Adrenal gland (tissue), 19 donors: ENCODE measurements at regions of chr3 and their contacts with region 1.

Region 1: DNA sequence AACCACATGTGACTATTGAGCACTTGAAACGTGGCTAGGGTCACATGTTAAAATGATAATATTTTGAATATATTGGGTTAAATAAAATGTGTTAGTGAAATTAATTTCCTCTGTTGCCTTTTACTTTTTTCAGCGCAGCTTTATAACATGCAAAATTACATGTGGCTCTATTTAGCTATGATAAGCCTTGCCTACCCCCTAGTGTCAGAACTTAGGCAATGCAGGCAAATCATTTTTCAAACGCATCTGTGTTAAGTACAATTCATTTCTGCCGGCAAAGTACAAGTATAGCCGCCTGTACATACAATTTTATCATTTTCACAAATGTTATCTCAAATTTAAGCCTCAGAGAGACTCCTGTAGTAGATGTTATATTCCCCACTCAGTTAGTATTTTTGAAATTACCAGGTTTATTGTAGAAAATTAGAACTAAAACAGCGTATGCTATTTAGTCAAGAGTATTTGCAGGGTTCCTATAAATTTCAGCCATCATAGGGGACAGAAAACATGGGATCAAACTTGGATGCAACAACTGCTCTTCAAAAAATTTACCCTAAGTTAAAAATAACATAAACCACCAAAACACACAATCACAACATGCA is 56.1 kb downstream of the TAFA4 start:
- DNase-seq: peak in 6 of 7 donors; percentile 30 to 73 (median 39)
- H3K4me3 ChIP-seq: no peak overlapping the region
- H3K27ac ChIP-seq: no peak overlapping the region
- H3K4me1 ChIP-seq: no peaks in the 10 kb centered on the region
- H3K27me3 ChIP-seq: no peaks in the 10 kb centered on the region
- CTCF ChIP-seq: peak; percentile 65 to 89 (median 86)
- POLR2A ChIP-seq: no peak

Region 2: DNA sequence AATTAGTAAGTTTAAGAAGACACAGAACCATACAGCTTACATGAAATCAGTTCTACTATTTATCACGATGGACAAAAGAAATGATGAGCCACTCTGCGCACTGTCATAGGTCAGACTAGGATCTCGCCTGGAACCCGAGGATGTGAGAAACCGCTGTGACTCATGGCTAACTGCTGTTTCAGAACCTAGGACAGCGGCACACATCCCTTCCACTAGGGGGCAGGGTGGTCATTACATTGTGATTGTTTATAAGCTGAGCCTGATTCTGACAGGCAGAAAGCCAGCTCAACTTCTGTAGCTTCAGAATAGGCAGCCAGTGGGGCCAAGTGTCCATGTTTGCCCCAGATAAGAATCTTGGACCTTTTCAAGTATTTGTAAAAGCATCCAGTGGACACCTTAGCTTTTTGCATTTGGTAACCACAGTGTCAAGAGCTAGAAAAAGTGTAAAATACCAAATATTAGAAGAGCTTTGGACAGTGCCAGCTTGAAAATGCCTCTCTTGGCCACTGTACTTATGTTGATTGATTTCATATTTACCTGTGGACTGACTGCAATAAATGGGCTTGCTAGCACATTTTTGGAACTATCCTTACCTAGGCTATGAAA is 1762.3 kb before region 1 on chr3:
- intact Hi-C with region 1: loop called in 1 of 2 experiments (anchors 5 kb)
- DNase-seq: peak; percentile 82 to 96 (median 87)
- H3K4me3 ChIP-seq: no peak overlapping the region
- H3K27ac ChIP-seq: no peak overlapping the region
- H3K4me1 ChIP-seq: no peaks in the 10 kb centered on the region
- H3K27me3 ChIP-seq: no peaks in the 10 kb centered on the region
- CTCF ChIP-seq: peak; percentile 79 to 93 (median 88)
- POLR2A ChIP-seq: no peak

Region 3: DNA sequence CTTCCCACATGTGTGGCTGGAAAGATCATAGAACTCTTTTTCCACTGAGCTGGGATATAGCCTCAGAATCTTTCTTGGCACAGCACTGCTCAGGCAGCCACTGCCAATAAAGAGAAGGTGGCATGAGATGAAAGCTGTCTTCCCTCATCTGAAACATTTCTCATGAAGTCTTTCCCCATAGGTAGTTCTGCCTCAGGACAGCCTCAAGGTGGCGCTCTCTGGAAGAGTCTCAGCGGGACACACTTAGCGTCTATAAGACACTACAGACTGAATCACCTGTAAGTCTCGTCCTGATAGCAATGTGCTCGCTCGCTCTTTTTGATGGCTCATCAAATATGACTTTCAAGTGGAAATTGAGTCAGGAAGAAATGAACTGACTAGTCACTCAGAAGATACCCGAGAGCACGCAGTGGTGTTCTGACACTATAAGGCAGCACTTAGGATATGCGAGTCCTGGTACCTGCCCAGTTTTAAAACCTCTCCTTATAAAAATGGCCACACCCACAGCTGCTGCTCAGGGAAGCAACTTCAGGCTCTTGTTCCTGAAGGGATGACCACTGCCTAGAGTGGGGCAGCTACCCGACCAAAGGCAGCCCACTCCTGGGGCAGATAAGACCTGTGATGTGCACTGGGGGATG is 1491.3 kb before region 1 on chr3:
- intact Hi-C with region 1: loop called in 1 of 2 experiments (anchors 10 kb)
- DNase-seq: peak in 6 of 7 donors; percentile 27 to 70 (median 46)
- H3K4me3 ChIP-seq: no peak overlapping the region
- H3K27ac ChIP-seq: no peak overlapping the region
- H3K4me1 ChIP-seq: peaks cover 0 to 35% of the 10 kb centered on the region in 2 donors
- H3K27me3 ChIP-seq: no peaks in the 10 kb centered on the region
- CTCF ChIP-seq: peak; percentile 21 to 55 (median 40)
- POLR2A ChIP-seq: no peak